ENCODE measurements at regions of chr9 and their contacts with region 1.

Region 1: DNA sequence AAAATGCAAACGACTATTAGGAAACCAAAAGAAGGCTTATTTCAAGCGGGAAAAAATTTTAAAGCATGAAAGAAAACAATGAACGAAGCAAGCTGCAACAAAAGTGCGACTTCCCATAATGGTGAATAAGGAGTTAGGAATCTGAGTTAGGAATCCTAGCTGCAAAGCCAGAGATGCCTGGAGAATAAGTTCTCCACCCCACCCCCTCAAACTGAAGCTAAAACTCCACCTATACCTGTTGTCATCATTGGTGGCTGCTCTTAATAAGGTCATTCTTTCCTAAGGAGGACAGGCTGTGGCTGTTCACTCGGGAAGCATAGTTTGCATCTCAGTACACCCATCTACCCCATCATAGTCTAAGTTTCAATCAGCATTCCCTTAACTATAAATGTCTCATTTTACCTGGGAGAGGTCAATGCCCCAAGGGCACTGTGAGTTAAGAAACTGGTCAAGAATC is 147.2 kb downstream of the GNAQ start:
- DNase-seq: peak in 1 of 2 experiments; percentile 29
- H3K4me3 ChIP-seq: no peak overlapping the region
- H3K27ac ChIP-seq: no peak overlapping the region
- H3K4me1 ChIP-seq: peaks cover 3 to 6% (median 5%) of the 10 kb centered on the region in 4 experiments; a peak in 5 of 7 replicates
- H3K27me3 ChIP-seq: no peaks in the 10 kb centered on the region
- CTCF ChIP-seq: no peak
- EP300 ChIP-seq: no peak
- POLR2A ChIP-seq: no peak
- RAD21 ChIP-seq: no peak

Region 2: DNA sequence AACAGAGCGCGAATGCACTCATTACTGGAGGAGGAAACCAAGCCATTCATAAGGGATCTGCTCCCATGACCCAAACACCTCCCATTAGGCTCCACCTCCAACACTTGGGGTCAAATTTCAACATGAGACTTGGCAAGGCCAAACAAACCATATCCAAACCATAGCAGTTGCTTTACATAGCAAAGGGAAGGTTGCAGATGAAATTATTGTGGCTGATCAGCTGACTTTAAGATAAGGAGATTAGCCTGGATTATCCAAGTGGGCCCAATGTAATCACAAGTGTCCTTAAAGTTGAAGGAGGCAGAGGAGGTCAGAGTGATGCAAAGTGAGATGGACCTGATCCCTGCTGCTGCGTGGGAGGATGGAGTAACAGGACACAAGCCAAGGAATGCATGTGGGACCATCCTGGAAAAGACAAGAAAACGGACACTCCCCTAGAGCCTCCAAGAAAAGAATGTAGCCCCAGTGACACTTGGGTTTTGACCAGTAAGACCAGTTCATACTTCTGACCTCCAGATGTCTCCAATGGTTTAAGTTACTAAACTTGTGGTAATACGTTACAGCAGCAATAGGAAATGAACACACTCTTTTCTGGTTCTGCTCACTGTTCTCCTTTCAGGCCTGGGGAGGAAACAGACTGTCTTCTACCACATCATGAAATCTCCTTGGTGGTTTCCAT is 20.1 kb before region 1 on chr9:
- CTCF ChIA-PET with region 1: interaction called, 12 read pairs
- POLR2A ChIA-PET with region 1: no interaction called
- DNase-seq: no peak
- H3K4me3 ChIP-seq: no peak overlapping the region
- H3K27ac ChIP-seq: no peak overlapping the region
- H3K4me1 ChIP-seq: no peaks in the 10 kb centered on the region
- H3K27me3 ChIP-seq: no peaks in the 10 kb centered on the region
- CTCF ChIP-seq: no peak
- EP300 ChIP-seq: no peak
- POLR2A ChIP-seq: no peak
- RAD21 ChIP-seq: no peak

Region 3: DNA sequence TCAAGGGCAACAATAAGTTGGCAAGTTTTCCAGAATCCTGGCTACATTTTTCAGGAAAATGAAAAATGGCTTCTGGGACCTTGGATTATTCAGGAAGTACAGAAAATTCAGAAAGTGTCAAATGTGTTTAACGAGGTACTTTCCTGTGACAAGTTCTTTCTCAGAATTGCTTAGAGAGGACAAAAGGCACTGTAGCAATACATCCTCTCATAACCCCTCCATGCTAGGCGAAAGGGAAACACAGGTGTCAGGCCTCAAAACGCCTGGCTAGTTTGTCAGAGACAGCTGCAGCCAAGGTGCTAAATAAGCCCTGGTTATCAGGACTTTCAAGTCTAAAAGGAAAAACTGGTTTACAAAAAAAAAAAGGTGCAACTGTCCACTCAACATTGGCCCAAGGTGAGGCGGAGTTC is 32.0 kb after region 1 on chr9:
- CTCF ChIA-PET with region 1: no interaction called
- POLR2A ChIA-PET with region 1: no interaction called
- DNase-seq: no peak
- H3K4me3 ChIP-seq: no peak overlapping the region
- H3K27ac ChIP-seq: no peak overlapping the region
- H3K4me1 ChIP-seq: peaks cover 0 to 2% (median under 1%) of the 10 kb centered on the region in 4 experiments; a peak in 2 of 7 replicates
- H3K27me3 ChIP-seq: no peaks in the 10 kb centered on the region
- CTCF ChIP-seq: no peak
- EP300 ChIP-seq: no peak
- POLR2A ChIP-seq: no peak
- RAD21 ChIP-seq: no peak